ENCODE measurements at regions of chr7 and their contacts with region 1.

Region 1: GRCh38 chr7:20172736-20173334 is 44.3 kb downstream of the MACC1 start:
- DNase-seq: peak; percentile 62
- H3K4me3 Mint-ChIP-seq: no peak overlapping the region
- H3K27ac Mint-ChIP-seq: no peak overlapping the region
- H3K4me1 Mint-ChIP-seq: no peaks in the 10 kb centered on the region
- H3K27me3 Mint-ChIP-seq: no peaks in the 10 kb centered on the region

Region 2: GRCh38 chr7:19754521-19755116 is 418.2 kb before region 1 on chr7:
- intact Hi-C with region 1: loop called (anchors 1 kb)
- DNase-seq: no peak
- H3K4me3 Mint-ChIP-seq: no peak overlapping the region
- H3K27ac Mint-ChIP-seq: no peak overlapping the region
- H3K4me1 Mint-ChIP-seq: no peaks in the 10 kb centered on the region
- H3K27me3 Mint-ChIP-seq: peaks cover 6% of the 10 kb centered on the region

Region 3: GRCh38 chr7:19982841-19983835 is 189.7 kb before region 1 on chr7:
- intact Hi-C with region 1: loop called (anchors 10 kb)
- DNase-seq: peak; percentile 57
- H3K4me3 Mint-ChIP-seq: no peak overlapping the region
- H3K27ac Mint-ChIP-seq: no peak overlapping the region
- H3K4me1 Mint-ChIP-seq: no peaks in the 10 kb centered on the region
- H3K27me3 Mint-ChIP-seq: no peaks in the 10 kb centered on the region

Region 4: DNA sequence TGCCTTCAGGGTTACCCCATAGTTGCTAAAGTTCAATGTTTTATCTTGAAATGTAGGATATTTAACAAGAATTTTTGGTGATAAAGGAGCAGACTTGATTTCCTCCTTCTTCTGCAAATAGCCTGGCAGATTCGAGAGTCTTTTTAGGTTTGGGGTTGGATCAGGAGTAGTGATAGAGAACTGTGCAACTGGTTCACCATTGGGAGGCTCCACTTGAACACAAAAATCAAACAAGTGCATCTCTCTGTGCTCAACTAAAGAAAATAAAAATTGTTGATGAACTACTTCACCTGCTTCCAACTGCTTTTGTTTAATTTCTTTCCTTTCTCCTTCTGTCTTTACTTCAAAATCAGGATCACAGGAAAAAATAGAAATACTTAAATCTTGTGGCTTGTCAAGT is 14.2 kb before region 1 on chr7:
- intact Hi-C with region 1: no loop called
- DNase-seq: no peak
- H3K4me3 Mint-ChIP-seq: no peak overlapping the region
- H3K27ac Mint-ChIP-seq: no peak overlapping the region
- H3K4me1 Mint-ChIP-seq: no peaks in the 10 kb centered on the region
- H3K27me3 Mint-ChIP-seq: no peaks in the 10 kb centered on the region

Region 5: DNA sequence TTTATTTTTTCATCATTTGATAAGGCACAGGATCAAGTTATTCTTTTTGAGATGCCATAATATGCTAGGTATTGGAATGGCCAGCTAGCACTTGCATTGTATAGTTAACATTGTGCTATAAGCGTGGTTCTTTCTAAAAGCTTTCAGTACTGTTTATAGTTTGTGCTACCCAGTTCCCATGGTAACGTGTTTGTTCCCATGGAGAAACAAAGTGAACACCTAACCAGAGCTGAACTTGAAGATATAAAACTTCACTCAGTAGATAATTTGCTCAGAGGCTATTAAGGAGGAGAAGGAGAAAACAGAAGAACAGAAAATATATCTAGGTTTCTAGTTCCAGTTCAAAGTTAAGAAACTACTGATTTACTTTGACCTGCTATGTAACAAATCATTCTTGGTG is 134.3 kb after region 1 on chr7:
- intact Hi-C with region 1: no loop called
- DNase-seq: no peak
- H3K4me3 Mint-ChIP-seq: no peak overlapping the region
- H3K27ac Mint-ChIP-seq: no peak overlapping the region
- H3K4me1 Mint-ChIP-seq: no peaks in the 10 kb centered on the region
- H3K27me3 Mint-ChIP-seq: peaks cover 6% of the 10 kb centered on the region

Measured in activated CD4-positive, alpha-beta T cell treated with anti-CD3 and anti-CD28 coated beads, Interleukin-2, amount 10 ng/mL, durations not matched to agents 24 days and 14 days (primary cell).